ENCODE measurements at regions of chr10 and their contacts with region 1.

Region 1: GRCh38 chr10:33489501-33490176 is 155.2 kb upstream of the NRP1 start:
- DNase-seq: no peak
- ATAC-seq: no peak

Region 2: DNA sequence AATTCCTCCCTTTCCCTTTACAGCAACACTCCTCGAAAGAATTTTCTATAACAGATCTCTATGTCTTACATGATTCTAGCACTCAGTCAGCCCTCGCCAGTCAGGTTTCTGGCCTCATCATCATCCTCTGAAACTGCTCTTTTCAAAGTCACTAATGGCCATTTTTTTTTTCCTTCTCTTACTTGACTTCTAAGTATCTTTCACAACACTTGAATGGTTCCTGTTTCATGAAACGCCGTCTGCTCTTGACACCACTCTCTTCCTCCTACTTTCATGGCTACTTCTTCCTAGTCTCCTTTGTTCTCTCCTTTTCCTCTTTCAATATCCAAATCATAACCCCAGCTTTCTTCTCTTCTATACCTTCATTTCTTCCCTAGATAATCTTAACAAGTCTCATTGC is 54.7 kb before region 1 on chr10:
- intact Hi-C with region 1: loop called (anchors 10 kb)
- DNase-seq: no peak
- ATAC-seq: no peak